Pancreas (tissue), 10 donors: ENCODE measurements at regions of chr3 and their contacts with region 1.

Region 1: GRCh38 chr3:147191795-147192385 is 214.5 kb downstream of the ZIC4 start:
- DNase-seq: peak in 3 of 6 donors; percentile 7 to 29 (median 16)
- ATAC-seq: peak in 3 of 4 donors; percentile 57 to 82 (median 63)
- H3K4me3 ChIP-seq: no peak overlapping the region
- H3K27ac ChIP-seq: no peak overlapping the region
- H3K4me1 ChIP-seq: no peaks in the 10 kb centered on the region
- H3K27me3 ChIP-seq: no peaks in the 10 kb centered on the region
- CTCF ChIP-seq: peak; percentile 61 to 75 (median 70)

Region 2: DNA sequence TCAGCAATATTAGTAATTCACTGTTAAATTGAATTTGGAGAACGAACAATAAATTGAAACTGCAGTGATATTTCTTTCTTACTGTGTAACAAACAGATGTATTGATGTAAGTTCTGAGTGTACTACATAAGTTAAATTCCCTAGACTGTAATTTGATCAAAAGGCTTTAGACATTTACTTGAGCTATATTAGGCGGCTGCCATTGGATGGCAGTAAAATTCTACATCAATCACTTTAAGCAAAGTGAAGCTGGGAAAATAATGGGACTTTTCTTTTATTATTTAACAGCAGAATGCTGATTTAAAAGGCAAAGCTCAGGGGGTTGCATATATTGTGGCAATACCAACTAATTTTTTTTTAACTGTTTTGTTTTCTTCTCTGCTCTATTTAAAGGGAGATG is 374.2 kb before region 1 on chr3:
- intact Hi-C with region 1: loop called in 1 of 3 experiments (anchors 5 kb)
- DNase-seq: no peak
- ATAC-seq: peak in 1 of 4 donors; percentile 56
- H3K4me3 ChIP-seq: no peak overlapping the region
- H3K27ac ChIP-seq: no peak overlapping the region
- H3K4me1 ChIP-seq: no peaks in the 10 kb centered on the region
- H3K27me3 ChIP-seq: peaks cover 0 to 5% (median 1%) of the 10 kb centered on the region in 4 donors
- CTCF ChIP-seq: no peak

Region 3: GRCh38 chr3:147015334-147015733 is 176.6 kb before region 1 on chr3:
- intact Hi-C with region 1: no loop called
- DNase-seq: no peak
- ATAC-seq: no peak
- H3K4me3 ChIP-seq: no peak overlapping the region
- H3K27ac ChIP-seq: no peak overlapping the region
- H3K4me1 ChIP-seq: no peaks in the 10 kb centered on the region
- H3K27me3 ChIP-seq: no peaks in the 10 kb centered on the region
- CTCF ChIP-seq: no peak